OCI-LY7 (cell line): ENCODE measurements at regions of chr15 and their contacts with region 1.

Region 1: DNA sequence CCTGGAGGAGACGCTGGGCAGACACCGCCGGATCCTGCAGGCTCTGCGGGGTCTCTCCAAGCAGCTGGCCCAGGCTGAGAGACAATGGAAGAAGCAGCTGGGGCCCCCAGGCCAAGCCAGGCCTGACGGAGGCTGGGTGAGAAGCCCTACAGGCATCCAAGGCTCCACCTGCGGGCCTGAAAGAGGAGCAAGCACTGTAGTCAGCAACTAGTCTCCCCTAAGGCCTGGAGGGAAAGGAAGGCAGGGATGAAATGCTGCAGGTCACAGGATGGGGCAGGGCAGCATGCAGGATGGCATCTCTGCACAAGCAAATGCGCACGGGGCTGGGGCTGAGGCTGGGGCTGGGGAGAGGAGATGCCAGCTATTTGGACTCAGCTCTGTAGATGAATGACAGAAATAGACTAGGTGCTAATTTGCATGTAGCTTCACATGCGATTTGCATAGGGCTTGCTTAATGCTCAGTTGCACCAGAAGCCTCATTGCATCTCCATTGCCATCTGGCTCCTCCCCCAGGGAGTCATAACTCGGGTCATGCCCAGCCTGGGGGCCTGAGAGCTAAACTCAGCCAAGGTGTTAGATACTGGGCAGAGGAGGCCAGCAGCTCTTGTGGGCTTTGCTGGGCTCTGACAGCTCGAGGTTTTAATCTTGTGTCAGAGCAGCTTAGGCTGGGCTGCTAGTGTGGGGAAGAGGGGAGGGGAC is 5.2 kb upstream of the CPLX3 start:
- DNase-seq: peak; percentile 94
- H3K4me3 ChIP-seq: peak overlapping the region; percentile 58
- H3K27ac ChIP-seq: peak overlapping the region; percentile 79
- H3K4me1 ChIP-seq: peaks cover 47% of the 10 kb centered on the region
- CTCF ChIP-seq: peak; percentile 50; the same call in 1 of the 2 replicates

Region 2: GRCh38 chr15:74709011-74709410 is 112.2 kb before region 1 on chr15:
- CTCF ChIA-PET with region 1: no interaction called
- POLR2A ChIA-PET with region 1: no interaction called
- intact Hi-C with region 1: no loop called
- DNase-seq: no peak
- H3K4me3 ChIP-seq: no peak overlapping the region
- H3K27ac ChIP-seq: no peak overlapping the region
- H3K4me1 ChIP-seq: no peaks in the 10 kb centered on the region
- CTCF ChIP-seq: no peak

Region 3: GRCh38 chr15:74781431-74782258 is 39.6 kb before region 1 on chr15 and contains the start of gene CSK:
- CTCF ChIA-PET with region 1: interaction called, 4 read pairs
- POLR2A ChIA-PET with region 1: interaction called, 14 read pairs
- intact Hi-C with region 1: loop called (anchors 1 kb)
- DNase-seq: peak; percentile 89
- H3K4me3 ChIP-seq: peak within 1 kb of the TSS; percentile 97
- H3K27ac ChIP-seq: peak within 1 kb of the TSS; percentile 99
- H3K4me1 ChIP-seq: peaks cover 72% of the 10 kb centered on the region
- CTCF ChIP-seq: peak; percentile 55
- total RNA-seq, gene CSK: 106 and 112 TPM in 2 replicates

Region 4: GRCh38 chr15:74799856-74800547 is 21.2 kb before region 1 on chr15:
- CTCF ChIA-PET with region 1: interaction called, 4 read pairs
- POLR2A ChIA-PET with region 1: no interaction called
- intact Hi-C with region 1: loop called (anchors 1 kb)
- DNase-seq: peak; percentile 77
- H3K4me3 ChIP-seq: no peak overlapping the region
- H3K27ac ChIP-seq: peak overlapping the region; percentile 61
- H3K4me1 ChIP-seq: peaks cover 55% of the 10 kb centered on the region
- CTCF ChIP-seq: peak; percentile 88

Region 5: DNA sequence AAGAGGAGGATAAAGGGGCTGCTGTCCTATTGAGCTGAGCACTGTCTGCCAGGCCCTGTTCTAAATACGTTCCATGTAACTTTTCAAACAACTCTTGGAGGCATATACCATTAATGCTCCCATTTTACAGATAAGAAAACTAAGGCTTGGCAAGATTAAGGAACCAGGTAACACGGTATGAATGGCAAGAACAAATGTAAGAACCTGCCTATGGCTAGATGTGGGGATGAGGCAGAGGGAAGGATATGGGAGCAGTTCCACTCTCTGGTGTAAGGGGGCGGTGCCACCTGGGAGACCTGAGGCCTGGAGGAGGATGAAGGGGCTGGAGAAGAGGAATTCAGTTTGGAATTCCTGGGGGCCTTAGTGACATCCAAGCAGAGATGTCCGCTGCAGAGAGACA is 12.4 kb before region 1 on chr15:
- CTCF ChIA-PET with region 1: no interaction called
- POLR2A ChIA-PET with region 1: interaction called, 11 read pairs
- intact Hi-C with region 1: no loop called
- DNase-seq: no peak
- H3K4me3 ChIP-seq: no peak overlapping the region
- H3K27ac ChIP-seq: no peak overlapping the region
- H3K4me1 ChIP-seq: peaks cover 12% of the 10 kb centered on the region
- CTCF ChIP-seq: peak; percentile 57

Region 6: GRCh38 chr15:74835307-74835823 is 14.1 kb after region 1 on chr15:
- CTCF ChIA-PET with region 1: no interaction called
- POLR2A ChIA-PET with region 1: interaction called, 12 read pairs
- intact Hi-C with region 1: no loop called
- DNase-seq: peak; percentile 53
- H3K4me3 ChIP-seq: no peak overlapping the region
- H3K27ac ChIP-seq: no peak overlapping the region
- H3K4me1 ChIP-seq: peaks cover 23% of the 10 kb centered on the region
- CTCF ChIP-seq: peak; percentile 93

Region 7: DNA sequence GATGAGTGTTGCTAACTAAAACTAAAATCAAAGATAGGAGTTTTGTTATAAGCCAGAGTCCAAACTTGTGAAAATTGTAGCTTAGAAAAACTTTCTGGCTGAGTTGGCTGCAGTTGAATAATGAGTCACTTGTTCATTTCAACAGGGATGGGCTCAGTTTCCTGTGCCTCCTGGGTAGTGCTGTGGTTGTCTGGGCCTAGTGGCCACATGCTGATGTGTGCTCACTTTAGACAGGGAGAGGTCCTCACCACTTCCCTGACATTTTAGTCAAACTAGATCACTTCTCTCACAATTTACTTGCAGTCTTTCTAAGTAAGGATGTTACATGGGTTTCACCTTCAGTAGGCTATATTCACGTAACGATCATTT is 1015.7 kb after region 1 on chr15:
- CTCF ChIA-PET with region 1: no interaction called
- POLR2A ChIA-PET with region 1: no interaction called
- intact Hi-C with region 1: no loop called
- DNase-seq: no peak
- H3K4me3 ChIP-seq: no peak overlapping the region
- H3K27ac ChIP-seq: no peak overlapping the region
- H3K4me1 ChIP-seq: no peaks in the 10 kb centered on the region
- CTCF ChIP-seq: no peak